ENCODE measurements at regions of chr22 and their contacts with region 1.

Region 1: GRCh38 chr22:43993027-43993760 is 30.9 kb upstream of the PARVB start:
- DNase-seq: peak; percentile 78
- ATAC-seq: peak; percentile 97
- H3K4me3 Mint-ChIP-seq: no peak overlapping the region
- H3K27ac Mint-ChIP-seq: no peak overlapping the region
- H3K4me1 Mint-ChIP-seq: no peaks in the 10 kb centered on the region
- H3K27me3 Mint-ChIP-seq: no peaks in the 10 kb centered on the region
- CTCF ChIP-seq: peak; percentile 93

Region 2: GRCh38 chr22:43945632-43946383 is 47.4 kb before region 1 on chr22:
- CTCF ChIA-PET with region 1: interaction called, 13 read pairs
- POLR2A ChIA-PET with region 1: no interaction called
- DNase-seq: peak; percentile 75
- ATAC-seq: peak; percentile 95
- H3K4me3 Mint-ChIP-seq: no peak overlapping the region
- H3K27ac Mint-ChIP-seq: no peak overlapping the region
- H3K4me1 Mint-ChIP-seq: no peaks in the 10 kb centered on the region
- H3K27me3 Mint-ChIP-seq: no peaks in the 10 kb centered on the region
- CTCF ChIP-seq: peak; percentile 57

Region 3: GRCh38 chr22:44049486-44050231 is 56.5 kb after region 1 on chr22:
- CTCF ChIA-PET with region 1: interaction called, 13 read pairs
- POLR2A ChIA-PET with region 1: no interaction called
- DNase-seq: no peak
- ATAC-seq: no peak
- H3K4me3 Mint-ChIP-seq: no peak overlapping the region
- H3K27ac Mint-ChIP-seq: no peak overlapping the region
- H3K4me1 Mint-ChIP-seq: peaks cover 15% of the 10 kb centered on the region
- H3K27me3 Mint-ChIP-seq: no peaks in the 10 kb centered on the region
- CTCF ChIP-seq: no peak

Region 4: DNA sequence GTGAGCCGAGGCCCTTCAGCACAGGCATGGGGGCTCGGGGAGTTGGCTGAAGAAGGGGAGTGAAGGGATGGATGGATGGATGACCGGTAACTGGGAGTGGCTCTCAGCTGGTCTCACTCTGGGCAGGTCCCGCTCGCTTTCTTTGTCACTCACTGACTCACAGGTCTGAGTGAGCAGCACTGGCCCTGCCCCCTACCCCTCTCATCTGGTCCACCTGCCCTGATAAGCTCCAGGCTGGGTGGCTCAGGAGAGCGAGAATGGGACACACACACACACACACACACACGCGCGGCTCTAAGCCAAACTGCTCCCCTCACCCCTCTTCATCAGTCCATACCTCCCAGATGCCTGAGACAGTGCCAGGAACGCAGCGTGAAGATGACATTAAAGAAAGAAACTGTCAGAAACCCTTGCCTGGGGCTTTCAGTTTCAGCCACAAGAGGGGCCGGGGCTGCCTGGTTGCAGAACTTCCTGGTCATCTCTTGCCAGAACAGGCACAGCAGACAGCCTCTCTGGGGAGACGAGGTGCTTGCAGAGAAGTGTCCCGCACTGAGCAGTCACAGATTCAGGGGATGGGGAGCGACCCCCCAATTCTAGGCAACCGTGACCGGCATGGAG is 336.1 kb after region 1 on chr22:
- CTCF ChIA-PET with region 1: interaction called, 17 read pairs
- POLR2A ChIA-PET with region 1: no interaction called
- DNase-seq: no peak
- ATAC-seq: no peak
- H3K4me3 Mint-ChIP-seq: 0 out of 2 replicates have a peak overlapping the region, but pooled peaks have one; percentile 29
- H3K27ac Mint-ChIP-seq: no peak overlapping the region
- H3K4me1 Mint-ChIP-seq: peaks cover 38% of the 10 kb centered on the region
- H3K27me3 Mint-ChIP-seq: peaks cover 31% of the 10 kb centered on the region
- CTCF ChIP-seq: no peak

Region 5: GRCh38 chr22:44380756-44381470 is 387.7 kb after region 1 on chr22:
- CTCF ChIA-PET with region 1: interaction called, 15 read pairs
- POLR2A ChIA-PET with region 1: no interaction called
- DNase-seq: no peak
- ATAC-seq: no peak
- H3K4me3 Mint-ChIP-seq: no peak overlapping the region
- H3K27ac Mint-ChIP-seq: no peak overlapping the region
- H3K4me1 Mint-ChIP-seq: no peaks in the 10 kb centered on the region
- H3K27me3 Mint-ChIP-seq: peaks cover 2% of the 10 kb centered on the region; the same call in 1 of the 2 replicates
- CTCF ChIP-seq: no peak

Region 6: DNA sequence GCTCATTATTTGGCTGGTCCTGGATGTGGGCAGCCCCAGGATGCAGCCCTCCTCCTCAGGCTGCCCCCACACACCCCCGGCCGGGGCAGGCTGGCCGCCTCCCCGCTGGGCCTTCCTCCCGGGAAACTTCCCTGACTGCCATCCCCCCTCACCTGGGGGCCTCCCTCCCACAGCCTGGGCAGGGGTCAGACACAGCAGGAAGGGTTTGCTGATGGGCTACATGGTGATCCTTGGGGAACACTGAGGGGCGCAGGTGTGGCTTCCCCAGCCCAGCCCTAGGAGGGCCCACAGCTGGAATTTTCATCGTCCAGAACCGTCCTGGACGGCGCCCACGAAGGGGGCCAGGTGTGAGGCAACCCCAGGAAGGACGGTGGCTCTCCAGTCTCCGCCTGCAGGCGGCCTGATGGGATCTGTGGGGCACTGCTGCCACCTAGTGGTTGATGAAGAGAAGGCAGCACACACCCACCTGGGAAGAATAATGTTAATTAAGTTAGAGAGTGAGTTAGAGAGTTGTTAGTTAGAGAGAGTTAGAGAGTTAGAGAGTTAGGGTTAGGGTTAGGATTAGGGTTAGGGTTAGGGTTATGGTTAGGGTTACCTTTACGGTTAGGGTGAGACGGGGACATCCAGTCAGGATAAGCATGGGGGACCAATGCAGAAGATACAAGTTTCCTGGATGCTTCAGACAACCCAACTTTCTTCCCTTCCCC is 632.9 kb after region 1 on chr22:
- CTCF ChIA-PET with region 1: interaction called, 44 read pairs
- POLR2A ChIA-PET with region 1: no interaction called
- DNase-seq: peak; percentile 84
- ATAC-seq: peak; percentile 75
- H3K4me3 Mint-ChIP-seq: no peak overlapping the region
- H3K27ac Mint-ChIP-seq: no peak overlapping the region
- H3K4me1 Mint-ChIP-seq: no peaks in the 10 kb centered on the region
- H3K27me3 Mint-ChIP-seq: peaks cover 87% of the 10 kb centered on the region
- CTCF ChIP-seq: peak; percentile 96